ENCODE measurements at regions of chr7 and their contacts with region 1.

Region 1: DNA sequence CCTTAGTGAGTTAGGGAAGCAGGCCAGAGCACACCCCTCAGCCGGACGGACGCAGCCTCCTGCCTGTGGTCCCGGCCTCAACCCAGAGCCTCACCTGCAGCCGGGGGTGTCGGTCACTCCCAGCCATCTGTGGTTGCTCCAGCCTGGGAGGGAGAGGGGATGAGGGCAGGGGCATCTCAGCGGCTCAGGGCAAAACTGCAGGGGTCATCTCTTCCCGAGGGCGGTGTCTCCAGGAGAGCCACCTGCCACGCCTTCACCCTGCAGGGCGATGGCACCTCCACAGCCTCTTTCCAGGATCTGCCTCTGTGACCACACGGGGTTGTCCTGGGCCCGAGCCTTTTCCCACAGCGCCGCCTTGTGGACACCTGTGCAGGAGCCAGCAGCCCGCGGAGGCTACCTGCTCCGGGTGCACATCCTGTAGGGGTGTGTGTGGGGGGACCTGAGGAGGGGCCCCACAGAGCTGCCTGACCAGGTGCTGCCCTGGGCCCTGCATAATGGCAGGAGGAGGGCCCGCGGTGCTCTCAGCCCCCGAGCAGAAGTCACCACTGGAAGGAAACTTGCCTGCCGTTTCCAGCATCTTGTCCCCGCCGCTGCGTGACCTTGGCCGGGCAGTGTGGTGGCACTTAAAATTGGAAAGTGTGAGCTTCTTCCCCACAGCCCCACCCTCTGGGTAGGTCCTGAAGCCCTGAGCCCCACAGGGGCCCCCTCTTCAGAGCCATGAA is 21.6 kb upstream of the AP5Z1 start:
- DNase-seq: peak; percentile 88
- H3K4me3 ChIP-seq: no peak overlapping the region
- H3K27ac ChIP-seq: peak overlapping the region in 3 of 4 donors; percentile 23 to 43 (median 25)
- H3K4me1 ChIP-seq: peaks cover 0 to 3% (median 0%) of the 10 kb centered on the region in 4 donors
- H3K27me3 ChIP-seq: no peaks in the 10 kb centered on the region
- CTCF ChIP-seq: peak; percentile 89 to 96 (median 96)
- EP300 ChIP-seq: no peak
- POLR2A ChIP-seq: no peak

Region 2: DNA sequence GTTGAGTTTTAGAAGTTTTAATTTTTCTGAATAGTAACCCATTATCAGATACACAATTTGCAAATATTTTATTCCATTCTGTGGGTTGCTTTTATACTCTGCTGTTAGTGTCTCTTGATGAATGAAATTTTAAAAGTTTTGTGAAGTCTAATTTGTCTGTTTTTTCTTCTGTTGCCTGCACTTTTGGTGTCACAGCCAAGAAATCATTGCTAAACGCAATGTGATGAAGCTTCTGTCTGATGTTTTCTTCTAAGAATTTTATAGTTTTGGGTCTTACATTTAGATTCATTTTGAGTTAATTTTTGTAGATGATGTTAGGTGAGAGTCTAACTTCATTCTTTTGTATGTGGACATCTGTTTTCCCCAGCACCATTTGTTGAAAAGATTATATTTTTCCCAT is 401.8 kb before region 1 on chr7:
- in situ Hi-C with region 1: no loop called
- intact Hi-C with region 1: no loop called
- DNase-seq: no peak
- H3K4me3 ChIP-seq: no peak overlapping the region
- H3K27ac ChIP-seq: no peak overlapping the region
- H3K4me1 ChIP-seq: no peaks in the 10 kb centered on the region
- H3K27me3 ChIP-seq: no peaks in the 10 kb centered on the region
- CTCF ChIP-seq: no peak
- EP300 ChIP-seq: no peak
- POLR2A ChIP-seq: no peak

Region 3: DNA sequence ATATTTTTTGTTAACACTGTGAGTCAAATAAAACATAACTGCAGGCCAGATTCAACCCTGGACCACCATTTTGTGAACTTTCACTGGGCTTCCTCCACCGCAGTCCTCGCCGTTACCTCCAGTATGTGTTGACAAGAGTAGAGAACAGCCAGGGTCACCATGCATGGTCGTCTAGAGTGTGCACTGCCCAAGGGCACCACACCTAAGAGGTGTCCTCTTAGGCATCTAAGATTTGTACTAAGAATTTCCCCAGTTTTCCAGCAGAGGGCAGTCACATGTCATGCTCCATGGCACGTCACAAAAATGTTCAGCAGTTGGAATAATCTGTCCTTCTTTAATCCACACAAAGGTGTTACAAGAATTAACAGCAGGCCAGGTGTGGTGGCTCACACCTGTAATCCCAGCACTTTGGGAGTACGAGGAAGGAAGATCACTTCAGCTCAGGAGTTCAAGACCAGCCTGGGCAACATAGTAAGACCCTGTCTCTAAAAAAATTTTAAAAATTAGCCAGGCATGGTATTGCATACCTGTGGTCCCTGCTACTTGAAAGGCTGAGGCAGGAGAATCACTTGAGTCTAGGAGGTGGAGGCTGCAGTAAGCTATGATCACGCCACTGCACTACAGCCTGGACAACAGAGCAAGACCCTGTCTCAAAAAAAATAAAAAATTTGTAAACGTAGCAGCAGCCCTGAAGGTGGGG is 143.0 kb before region 1 on chr7:
- in situ Hi-C with region 1: loop called in 2 of 4 experiments (anchors 25 kb)
- intact Hi-C with region 1: no loop called
- DNase-seq: peak; percentile 55
- H3K4me3 ChIP-seq: no peak overlapping the region
- H3K27ac ChIP-seq: no peak overlapping the region
- H3K4me1 ChIP-seq: peaks cover 0 to 10% (median 0%) of the 10 kb centered on the region in 4 donors
- H3K27me3 ChIP-seq: peaks cover under 1% of the 10 kb centered on the region
- CTCF ChIP-seq: peak; percentile 77 to 92 (median 86)
- EP300 ChIP-seq: no peak
- POLR2A ChIP-seq: no peak

Region 4: DNA sequence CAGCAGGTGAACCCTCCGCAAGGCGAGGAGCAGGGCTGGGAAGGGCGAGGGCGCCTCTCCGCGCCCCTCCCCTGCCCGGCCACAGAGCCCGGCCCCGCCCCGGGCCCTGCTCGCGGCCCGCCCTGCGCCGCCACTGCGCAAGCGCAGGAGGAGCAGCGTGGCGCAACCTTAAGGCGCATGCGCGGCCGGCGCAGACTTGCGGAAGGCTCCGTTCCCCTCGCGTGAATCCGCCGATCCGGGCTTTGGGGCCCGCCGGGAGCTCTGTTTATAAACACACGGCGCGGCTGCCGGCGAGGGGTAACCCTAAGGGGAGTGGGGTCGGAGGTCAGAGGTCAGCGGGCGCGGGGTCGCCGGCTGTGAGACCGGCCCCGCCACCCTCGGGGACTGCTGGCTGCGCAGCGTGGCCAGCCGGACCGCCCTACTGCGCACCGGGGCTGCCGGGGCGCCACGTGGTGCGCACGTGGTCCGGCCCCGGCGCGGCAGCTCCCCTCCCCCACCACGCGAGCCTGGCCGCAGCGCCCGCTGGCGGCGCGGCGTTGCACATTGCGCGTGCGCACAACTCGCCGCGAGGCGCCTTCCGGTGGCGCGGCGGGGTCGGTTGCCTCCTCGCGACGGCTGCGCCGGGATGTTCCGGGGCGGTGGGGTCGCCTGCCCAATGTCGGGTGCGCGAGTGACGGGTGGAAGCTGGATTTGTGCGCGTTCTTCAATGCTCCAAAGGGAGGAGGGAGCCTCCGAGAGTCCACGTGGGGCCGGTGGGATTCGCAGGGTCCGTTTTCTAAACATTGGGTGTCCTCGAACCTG is 112.0 kb before region 1 on chr7:
- in situ Hi-C with region 1: loop called in 1 of 4 experiments (anchors 10 kb)
- intact Hi-C with region 1: loop called (anchors 5 kb)
- DNase-seq: peak; percentile 97
- H3K4me3 ChIP-seq: peak overlapping the region; percentile 44 to 77 (median 58)
- H3K27ac ChIP-seq: peak overlapping the region; percentile 87 to 93 (median 90)
- H3K4me1 ChIP-seq: peaks cover 0 to 12% (median 6%) of the 10 kb centered on the region in 4 donors
- H3K27me3 ChIP-seq: no peaks in the 10 kb centered on the region
- CTCF ChIP-seq: peak in 2 of 5 experiments; percentile 22 to 49
- EP300 ChIP-seq: no peak
- POLR2A ChIP-seq: peak; percentile 81

Region 5: DNA sequence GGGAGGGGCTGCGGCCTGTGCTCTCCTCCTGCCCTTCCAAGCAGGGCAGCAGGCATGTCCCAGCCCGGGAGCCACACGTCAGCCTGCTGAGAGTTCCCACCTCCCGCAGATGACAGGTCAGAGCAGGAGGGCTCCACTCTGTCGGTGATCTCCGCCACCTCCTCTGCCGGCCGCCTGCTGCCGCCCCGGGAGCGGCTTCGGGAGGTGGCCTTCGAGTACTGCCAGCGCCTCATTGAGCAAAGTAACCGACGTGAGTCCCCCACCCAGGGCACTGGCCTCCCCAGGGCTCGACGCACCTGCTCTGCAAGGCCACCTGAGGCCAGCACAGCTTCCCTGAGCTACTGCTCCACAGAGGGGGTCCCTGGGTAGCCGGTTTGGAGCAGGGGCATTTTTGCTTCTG is 30.9 kb after region 1 on chr7:
- in situ Hi-C with region 1: no loop called
- intact Hi-C with region 1: loop called (anchors 1 kb)
- DNase-seq: no peak
- H3K4me3 ChIP-seq: no peak overlapping the region
- H3K27ac ChIP-seq: no peak overlapping the region
- H3K4me1 ChIP-seq: no peaks in the 10 kb centered on the region
- H3K27me3 ChIP-seq: no peaks in the 10 kb centered on the region
- CTCF ChIP-seq: no peak
- EP300 ChIP-seq: no peak
- POLR2A ChIP-seq: no peak

Region 6: DNA sequence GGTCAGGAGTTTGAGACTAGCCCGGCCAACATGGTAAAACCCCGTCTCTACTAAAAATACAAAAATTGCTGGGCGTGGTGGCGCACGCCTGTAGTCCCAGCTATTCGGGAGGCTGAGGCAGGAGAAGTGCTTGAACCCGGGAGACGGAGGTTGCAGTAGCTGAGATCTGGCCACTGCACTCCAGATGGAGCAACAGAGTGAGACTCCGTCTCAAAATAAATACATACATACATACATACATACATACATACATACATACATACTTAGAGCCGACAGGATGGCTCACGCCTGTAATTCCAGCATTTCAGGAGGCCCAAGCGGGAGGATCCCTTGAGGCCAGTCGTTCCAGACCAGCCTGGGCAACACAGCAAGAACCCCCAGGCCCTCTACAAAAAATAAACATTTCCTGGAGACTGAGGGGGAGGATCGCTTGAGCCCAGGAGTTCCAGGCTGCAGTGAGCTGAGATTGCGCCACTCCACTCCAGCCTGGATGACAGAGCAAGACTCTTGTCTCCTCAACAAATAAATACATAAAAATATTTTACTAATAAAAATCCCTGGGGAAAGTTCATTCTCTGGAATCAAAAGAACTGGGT is 760.7 kb after region 1 on chr7:
- in situ Hi-C with region 1: no loop called
- intact Hi-C with region 1: no loop called
- DNase-seq: no peak
- H3K4me3 ChIP-seq: peak overlapping the region in 3 of 4 donors; percentile 65 to 100 (median 85)
- H3K27ac ChIP-seq: peak overlapping the region; percentile 94 to 100 (median 96)
- H3K4me1 ChIP-seq: peaks cover 8 to 19% (median 17%) of the 10 kb centered on the region in 4 donors
- H3K27me3 ChIP-seq: no peaks in the 10 kb centered on the region
- CTCF ChIP-seq: no peak
- EP300 ChIP-seq: no peak
- POLR2A ChIP-seq: no peak

Measured in transverse colon (tissue), 4 donors.